IMR-90 (cell line): ENCODE measurements at regions of chr7 and their contacts with region 1.

Region 1: DNA sequence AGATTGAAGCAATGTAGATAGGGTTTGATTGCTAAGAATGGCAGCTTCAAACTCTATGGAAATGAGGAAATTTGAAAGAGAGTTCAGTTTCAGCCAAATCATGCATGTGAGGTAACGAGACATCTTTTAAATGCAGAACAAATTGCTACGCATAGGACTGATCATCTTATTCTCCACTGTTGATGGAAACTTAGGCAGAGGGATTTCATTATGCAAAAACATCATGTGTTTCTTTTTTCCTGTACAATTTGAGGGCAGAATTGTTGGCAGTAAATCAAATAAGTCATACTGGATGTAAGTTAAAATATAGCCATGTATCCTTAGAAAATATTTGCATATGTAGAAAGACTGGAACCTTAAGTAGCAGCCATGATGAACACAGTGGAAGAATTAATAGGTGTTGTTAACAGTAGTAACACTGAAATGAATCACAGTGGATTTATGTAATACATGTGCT is 327.4 kb downstream of the CDK14 start:
- DNase-seq: peak; percentile 23
- ATAC-seq: no peak
- H3K4me3 ChIP-seq: no peak overlapping the region
- H3K27ac ChIP-seq: no peak overlapping the region
- H3K4me1 ChIP-seq: no peaks in the 10 kb centered on the region
- H3K27me3 ChIP-seq: no peaks in the 10 kb centered on the region
- CTCF ChIP-seq: no peak
- POLR2A ChIP-seq: no peak
- RAD21 ChIP-seq: no peak

Region 2: DNA sequence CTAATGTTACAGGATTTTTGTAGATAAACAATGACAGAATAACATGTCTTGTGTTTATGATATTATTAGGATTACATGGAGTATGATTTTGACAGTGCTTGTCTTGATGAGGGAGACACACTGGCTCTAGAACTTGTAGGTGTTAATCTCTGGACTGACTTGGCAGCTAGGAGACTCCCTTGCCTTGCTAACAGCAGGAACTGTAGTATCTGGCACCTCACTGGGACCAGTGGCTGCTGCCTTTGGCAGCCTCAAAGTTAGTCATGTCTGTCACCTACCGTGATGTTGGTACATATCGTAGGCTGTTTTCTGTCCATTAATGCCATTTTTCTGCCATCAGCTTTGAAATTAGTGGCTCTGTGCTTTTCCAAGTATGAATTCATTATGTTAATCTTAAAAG is 66.0 kb before region 1 on chr7:
- CTCF ChIA-PET with region 1: no interaction called
- POLR2A ChIA-PET with region 1: no interaction called
- dilution Hi-C with region 1: no loop called
- in situ Hi-C with region 1: no loop called
- intact Hi-C with region 1: no loop called
- DNase-seq: no peak
- ATAC-seq: no peak
- H3K4me3 ChIP-seq: no peak overlapping the region
- H3K27ac ChIP-seq: no peak overlapping the region
- H3K4me1 ChIP-seq: peaks cover 2% of the 10 kb centered on the region; the same call in 1 of the 2 replicates
- H3K27me3 ChIP-seq: no peaks in the 10 kb centered on the region
- CTCF ChIP-seq: no peak
- POLR2A ChIP-seq: no peak
- RAD21 ChIP-seq: no peak

Region 3: GRCh38 chr7:90910136-90910535 is 13.4 kb before region 1 on chr7:
- CTCF ChIA-PET with region 1: no interaction called
- POLR2A ChIA-PET with region 1: interaction called, 17 read pairs
- dilution Hi-C with region 1: no loop called
- in situ Hi-C with region 1: no loop called
- intact Hi-C with region 1: no loop called
- DNase-seq: peak; percentile 33
- ATAC-seq: no peak
- H3K4me3 ChIP-seq: no peak overlapping the region
- H3K27ac ChIP-seq: no peak overlapping the region
- H3K4me1 ChIP-seq: no peaks in the 10 kb centered on the region
- H3K27me3 ChIP-seq: no peaks in the 10 kb centered on the region
- CTCF ChIP-seq: no peak
- POLR2A ChIP-seq: no peak
- RAD21 ChIP-seq: no peak

Region 4: DNA sequence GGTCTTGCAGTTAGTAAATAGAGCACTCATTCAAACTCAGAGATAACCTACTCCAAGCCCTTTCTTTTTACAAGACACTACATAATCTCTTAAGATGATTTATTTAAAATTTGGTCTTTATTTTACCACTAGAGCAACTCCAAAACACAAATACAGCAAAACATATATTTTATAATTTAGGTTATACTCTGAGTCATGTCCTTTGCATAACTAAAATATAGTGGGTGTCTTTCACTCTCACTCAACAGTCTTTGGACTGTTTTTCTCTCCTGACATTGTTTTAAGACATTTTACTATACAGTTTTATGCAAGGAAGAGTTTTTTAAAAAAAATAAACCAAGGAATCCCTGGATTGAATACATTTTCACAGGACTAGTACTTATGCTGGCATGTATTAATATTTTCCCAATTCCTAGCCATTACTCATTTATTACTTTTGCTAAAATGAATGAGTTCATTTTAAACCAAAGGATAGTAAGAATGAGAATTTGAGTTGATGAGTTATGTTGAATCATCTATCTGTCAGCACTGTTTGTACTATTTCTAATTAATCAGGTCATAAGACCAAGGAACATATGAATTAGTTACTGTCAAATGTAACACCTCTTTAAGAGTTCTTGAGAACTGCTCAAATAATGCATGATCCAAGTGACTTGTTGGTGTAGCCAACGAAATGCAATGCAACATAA is 37.6 kb after region 1 on chr7:
- CTCF ChIA-PET with region 1: no interaction called
- POLR2A ChIA-PET with region 1: no interaction called
- dilution Hi-C with region 1: no loop called
- in situ Hi-C with region 1: no loop called
- intact Hi-C with region 1: no loop called
- DNase-seq: peak; percentile 15
- ATAC-seq: peak; percentile 17; the same call in 1 of the 2 replicates
- H3K4me3 ChIP-seq: no peak overlapping the region
- H3K27ac ChIP-seq: no peak overlapping the region
- H3K4me1 ChIP-seq: no peaks in the 10 kb centered on the region
- H3K27me3 ChIP-seq: no peaks in the 10 kb centered on the region
- CTCF ChIP-seq: no peak
- POLR2A ChIP-seq: no peak
- RAD21 ChIP-seq: no peak

Region 5: DNA sequence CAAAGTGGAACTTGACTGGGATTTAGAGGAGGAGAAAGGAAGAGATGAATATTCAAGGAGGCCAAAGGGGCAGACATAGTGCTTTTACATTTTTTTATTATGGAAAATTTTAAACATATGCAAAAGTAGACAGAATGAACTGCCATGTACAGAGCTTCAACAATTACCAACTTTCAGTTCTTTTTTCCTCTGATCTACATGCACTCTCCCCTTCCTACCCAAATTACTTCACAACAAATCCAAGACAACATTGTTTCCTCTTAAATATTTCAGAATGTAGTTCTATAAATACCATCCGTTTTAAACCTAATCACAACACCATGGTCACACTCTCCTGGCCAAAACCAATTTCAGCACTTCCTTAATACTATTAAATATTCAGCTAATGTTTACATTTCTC is 257.2 kb after region 1 on chr7:
- CTCF ChIA-PET with region 1: no interaction called
- POLR2A ChIA-PET with region 1: no interaction called
- dilution Hi-C with region 1: no loop called
- in situ Hi-C with region 1: no loop called
- intact Hi-C with region 1: no loop called
- DNase-seq: no peak
- ATAC-seq: no peak
- H3K4me3 ChIP-seq: no peak overlapping the region
- H3K27ac ChIP-seq: no peak overlapping the region
- H3K4me1 ChIP-seq: peaks cover 6% of the 10 kb centered on the region; the same call in 1 of the 2 replicates
- H3K27me3 ChIP-seq: no peaks in the 10 kb centered on the region
- CTCF ChIP-seq: no peak
- POLR2A ChIP-seq: no peak
- RAD21 ChIP-seq: no peak